Activated CD4-positive, alpha-beta T cell treated with anti-CD3 and anti-CD28 coated beads for 36 hours (primary cell): ENCODE measurements at regions of chr17 and their contacts with region 1.

Region 1: DNA sequence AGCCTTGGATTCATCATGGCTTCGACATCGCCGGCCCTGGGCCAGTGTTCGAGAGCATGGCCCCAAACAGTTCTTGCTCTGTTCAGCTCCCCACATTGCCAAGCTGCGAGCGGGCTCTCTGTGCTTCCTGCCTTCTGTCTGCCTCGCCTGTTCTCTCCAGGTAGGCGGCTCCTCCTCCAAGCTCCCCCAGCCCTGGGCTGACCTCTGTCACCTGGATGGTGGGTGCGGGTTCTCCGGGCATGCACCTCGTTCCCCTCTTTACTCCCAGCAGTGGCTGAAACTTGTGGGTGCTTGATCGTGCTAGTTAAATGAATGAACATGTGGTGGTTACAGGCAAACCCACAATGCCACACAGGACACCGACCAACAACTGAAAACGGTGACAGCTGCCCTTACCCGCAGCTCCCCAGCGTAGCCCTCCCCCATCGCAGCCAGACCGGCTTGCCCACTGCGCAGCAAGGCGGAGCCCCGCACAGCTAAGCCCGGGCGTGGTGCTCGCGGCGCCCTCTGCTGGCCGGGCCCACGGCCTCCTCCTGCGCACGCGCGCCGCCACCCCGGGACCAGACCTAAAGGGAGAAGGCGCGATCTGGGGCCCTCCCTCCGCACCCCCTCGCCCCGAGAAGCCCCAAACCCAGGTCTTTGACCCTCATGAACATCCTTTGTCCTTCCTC is 23.0 kb upstream of the EIF1 start:
- DNase-seq: peak; percentile 95
- ATAC-seq: peak; percentile 85
- H3K4me3 Mint-ChIP-seq: peak overlapping the region; percentile 78
- H3K27ac Mint-ChIP-seq: peak overlapping the region; percentile 95
- H3K4me1 Mint-ChIP-seq: peaks cover 42% of the 10 kb centered on the region
- H3K27me3 Mint-ChIP-seq: peaks cover 3% of the 10 kb centered on the region

Region 2: GRCh38 chr17:40803617-40804082 is 862.1 kb before region 1 on chr17:
- CTCF ChIA-PET with region 1: interaction called, 6 read pairs
- POLR2A ChIA-PET with region 1: no interaction called
- intact Hi-C with region 1: loop called (anchors 1 kb)
- DNase-seq: peak; percentile 89
- ATAC-seq: peak; percentile 93
- H3K4me3 Mint-ChIP-seq: no peak overlapping the region
- H3K27ac Mint-ChIP-seq: no peak overlapping the region
- H3K4me1 Mint-ChIP-seq: peaks cover 2% of the 10 kb centered on the region
- H3K27me3 Mint-ChIP-seq: peaks cover 30% of the 10 kb centered on the region

Region 3: GRCh38 chr17:40909351-40909750 is 756.4 kb before region 1 on chr17:
- CTCF ChIA-PET with region 1: interaction called, 8 read pairs
- POLR2A ChIA-PET with region 1: no interaction called
- intact Hi-C with region 1: loop called (anchors 1 kb)
- DNase-seq: peak; percentile 79
- ATAC-seq: peak; percentile 94
- H3K4me3 Mint-ChIP-seq: no peak overlapping the region
- H3K27ac Mint-ChIP-seq: no peak overlapping the region
- H3K4me1 Mint-ChIP-seq: no peaks in the 10 kb centered on the region
- H3K27me3 Mint-ChIP-seq: peaks cover 31% of the 10 kb centered on the region

Region 4: GRCh38 chr17:41367426-41368075 is 298.1 kb before region 1 on chr17:
- CTCF ChIA-PET with region 1: no interaction called
- POLR2A ChIA-PET with region 1: no interaction called
- intact Hi-C with region 1: no loop called
- DNase-seq: no peak
- ATAC-seq: no peak
- H3K4me3 Mint-ChIP-seq: no peak overlapping the region
- H3K27ac Mint-ChIP-seq: no peak overlapping the region
- H3K4me1 Mint-ChIP-seq: peaks cover 2% of the 10 kb centered on the region
- H3K27me3 Mint-ChIP-seq: no peaks in the 10 kb centered on the region

Region 5: GRCh38 chr17:41403798-41404671 is 261.7 kb before region 1 on chr17:
- CTCF ChIA-PET with region 1: interaction called, 6 read pairs
- POLR2A ChIA-PET with region 1: no interaction called
- intact Hi-C with region 1: loop called in 1 of 2 experiments (anchors 5 kb)
- DNase-seq: peak; percentile 80
- ATAC-seq: peak; percentile 91
- H3K4me3 Mint-ChIP-seq: peak overlapping the region; percentile 10
- H3K27ac Mint-ChIP-seq: peak overlapping the region; percentile 87
- H3K4me1 Mint-ChIP-seq: peaks cover 37% of the 10 kb centered on the region
- H3K27me3 Mint-ChIP-seq: peaks cover 2% of the 10 kb centered on the region

Region 6: GRCh38 chr17:41442739-41443138 is 223.0 kb before region 1 on chr17:
- CTCF ChIA-PET with region 1: no interaction called
- POLR2A ChIA-PET with region 1: no interaction called
- intact Hi-C with region 1: no loop called
- DNase-seq: no peak
- ATAC-seq: no peak
- H3K4me3 Mint-ChIP-seq: no peak overlapping the region
- H3K27ac Mint-ChIP-seq: no peak overlapping the region
- H3K4me1 Mint-ChIP-seq: no peaks in the 10 kb centered on the region
- H3K27me3 Mint-ChIP-seq: peaks cover 5% of the 10 kb centered on the region

Region 7: DNA sequence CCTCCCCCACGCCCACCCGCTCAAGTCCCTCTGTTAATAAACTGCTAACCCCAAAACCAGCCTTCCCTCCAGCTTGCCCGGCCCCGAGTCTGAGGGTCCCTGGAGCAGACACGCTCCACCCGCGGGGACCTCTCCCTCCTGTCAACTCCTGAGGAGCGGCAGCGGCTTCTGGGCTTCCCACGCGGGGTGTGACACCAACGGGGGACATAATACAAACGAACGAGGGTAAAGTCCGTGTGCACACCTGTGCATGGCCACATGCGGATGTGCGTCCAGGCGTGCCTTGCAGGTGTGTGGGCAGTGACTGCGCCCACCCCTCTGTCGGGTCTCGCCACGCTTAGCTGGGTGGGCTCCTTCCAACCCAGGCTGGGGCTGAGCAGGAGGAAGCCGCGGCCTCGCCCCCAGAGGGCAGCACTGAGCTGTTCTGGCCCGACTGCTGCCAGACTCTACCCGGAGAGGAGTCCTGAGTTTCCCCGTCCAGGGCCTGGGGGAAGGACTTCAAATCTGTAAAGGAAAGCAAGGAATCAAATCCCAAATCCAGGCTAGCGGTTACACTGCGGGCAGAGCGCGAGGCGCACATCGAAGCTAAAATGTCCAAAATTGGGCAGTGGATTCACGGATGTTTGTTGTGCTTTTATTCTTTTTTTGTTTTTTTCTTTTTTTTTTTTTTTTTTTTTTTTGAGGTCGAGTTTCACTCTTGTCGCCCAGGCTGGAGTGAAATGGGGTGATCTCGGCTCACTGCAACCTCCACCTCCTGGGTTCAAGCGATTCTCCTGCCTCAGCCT is 17.1 kb before region 1 on chr17:
- CTCF ChIA-PET with region 1: interaction called, 252 read pairs
- POLR2A ChIA-PET with region 1: no interaction called
- intact Hi-C with region 1: loop called (anchors 1 kb)
- DNase-seq: peak; percentile 92
- ATAC-seq: peak; percentile 91
- H3K4me3 Mint-ChIP-seq: peak overlapping the region; percentile 50
- H3K27ac Mint-ChIP-seq: peak overlapping the region; percentile 66
- H3K4me1 Mint-ChIP-seq: peaks cover 9% of the 10 kb centered on the region
- H3K27me3 Mint-ChIP-seq: no peaks in the 10 kb centered on the region

Region 8: DNA sequence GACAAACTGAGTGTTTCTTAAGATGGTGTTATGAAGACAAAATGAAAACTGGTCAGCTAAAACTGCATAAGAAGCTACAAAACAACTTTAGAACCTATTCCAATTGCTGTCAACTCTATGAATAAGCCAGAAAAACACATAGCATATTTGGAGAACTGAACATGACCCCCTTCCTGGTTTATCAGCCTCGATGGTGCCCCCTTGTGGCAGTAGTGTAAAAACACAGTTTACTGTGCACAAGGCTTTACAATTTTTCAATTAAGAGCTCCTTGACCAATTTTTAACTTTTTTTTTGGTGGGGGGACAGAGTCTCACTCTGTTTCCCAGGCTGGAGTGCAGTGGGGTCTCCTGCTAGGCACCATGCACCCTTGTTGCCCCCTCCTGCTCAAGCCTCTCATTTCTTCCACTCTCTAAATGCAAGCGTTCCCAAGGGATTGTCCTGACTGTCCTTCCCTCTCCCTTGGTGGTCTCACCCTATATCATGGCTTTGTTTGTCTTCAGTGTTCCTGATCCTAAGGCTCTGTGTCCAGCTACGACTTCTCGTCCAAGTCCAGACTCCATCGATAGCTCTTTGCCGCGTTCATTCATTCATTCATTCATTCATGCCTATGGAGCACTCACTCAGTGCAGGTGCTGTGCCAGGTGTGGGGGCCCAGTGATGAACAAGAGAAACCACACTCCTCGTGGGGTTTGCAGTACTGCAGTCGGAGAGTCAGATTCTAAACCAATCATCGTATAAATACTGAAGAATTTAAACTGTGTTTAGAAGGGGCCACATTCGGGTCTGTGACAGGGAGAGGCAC is 30.5 kb after region 1 on chr17:
- CTCF ChIA-PET with region 1: interaction called, 64 read pairs
- POLR2A ChIA-PET with region 1: interaction called, 10 read pairs
- intact Hi-C with region 1: no loop called
- DNase-seq: peak; percentile 90
- ATAC-seq: peak; percentile 62
- H3K4me3 Mint-ChIP-seq: no peak overlapping the region
- H3K27ac Mint-ChIP-seq: no peak overlapping the region
- H3K4me1 Mint-ChIP-seq: peaks cover 18% of the 10 kb centered on the region
- H3K27me3 Mint-ChIP-seq: no peaks in the 10 kb centered on the region

Region 9: DNA sequence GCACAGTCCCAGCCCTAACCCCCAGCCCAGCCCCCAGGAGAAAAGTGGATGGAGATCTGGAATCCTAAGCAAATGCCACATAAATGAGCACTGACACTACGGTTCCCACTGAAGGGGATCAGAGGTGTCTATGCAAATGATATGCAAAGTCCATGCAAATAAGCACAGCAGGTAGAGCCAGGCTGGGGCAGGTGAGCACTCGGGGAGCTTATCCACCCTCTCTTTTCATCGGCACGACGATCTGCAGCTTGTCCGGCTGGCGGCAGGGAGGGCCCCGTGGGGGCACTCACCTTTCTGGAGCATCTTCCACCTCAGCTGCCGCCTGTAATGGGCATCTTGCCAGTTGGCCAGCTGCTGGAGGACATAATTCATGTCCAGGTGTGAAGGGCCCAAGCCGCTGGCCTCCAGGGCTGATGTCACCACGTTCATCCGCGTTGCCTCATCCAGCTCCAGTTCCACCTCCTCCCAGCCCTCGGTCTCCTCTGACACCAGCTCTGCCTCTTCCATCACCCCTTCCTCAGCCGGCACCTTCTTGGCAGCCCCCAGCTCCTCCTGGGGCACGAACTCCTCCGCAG is 58.9 kb after region 1 on chr17:
- CTCF ChIA-PET with region 1: no interaction called
- POLR2A ChIA-PET with region 1: no interaction called
- intact Hi-C with region 1: no loop called
- DNase-seq: no peak
- ATAC-seq: no peak
- H3K4me3 Mint-ChIP-seq: no peak overlapping the region
- H3K27ac Mint-ChIP-seq: no peak overlapping the region
- H3K4me1 Mint-ChIP-seq: no peaks in the 10 kb centered on the region
- H3K27me3 Mint-ChIP-seq: no peaks in the 10 kb centered on the region